ENCODE measurements at regions of chr1 and their contacts with region 1.

Region 1: GRCh38 chr1:150957666-150958065 is 17.0 kb downstream of the CERS2 start:
- DNase-seq: no peak
- H3K4me3 ChIP-seq: no peak overlapping the region
- H3K27ac ChIP-seq: no peak overlapping the region
- H3K4me1 ChIP-seq: no peaks in the 10 kb centered on the region
- H3K27me3 ChIP-seq: no peaks in the 10 kb centered on the region
- CTCF ChIP-seq: no peak

Region 2: DNA sequence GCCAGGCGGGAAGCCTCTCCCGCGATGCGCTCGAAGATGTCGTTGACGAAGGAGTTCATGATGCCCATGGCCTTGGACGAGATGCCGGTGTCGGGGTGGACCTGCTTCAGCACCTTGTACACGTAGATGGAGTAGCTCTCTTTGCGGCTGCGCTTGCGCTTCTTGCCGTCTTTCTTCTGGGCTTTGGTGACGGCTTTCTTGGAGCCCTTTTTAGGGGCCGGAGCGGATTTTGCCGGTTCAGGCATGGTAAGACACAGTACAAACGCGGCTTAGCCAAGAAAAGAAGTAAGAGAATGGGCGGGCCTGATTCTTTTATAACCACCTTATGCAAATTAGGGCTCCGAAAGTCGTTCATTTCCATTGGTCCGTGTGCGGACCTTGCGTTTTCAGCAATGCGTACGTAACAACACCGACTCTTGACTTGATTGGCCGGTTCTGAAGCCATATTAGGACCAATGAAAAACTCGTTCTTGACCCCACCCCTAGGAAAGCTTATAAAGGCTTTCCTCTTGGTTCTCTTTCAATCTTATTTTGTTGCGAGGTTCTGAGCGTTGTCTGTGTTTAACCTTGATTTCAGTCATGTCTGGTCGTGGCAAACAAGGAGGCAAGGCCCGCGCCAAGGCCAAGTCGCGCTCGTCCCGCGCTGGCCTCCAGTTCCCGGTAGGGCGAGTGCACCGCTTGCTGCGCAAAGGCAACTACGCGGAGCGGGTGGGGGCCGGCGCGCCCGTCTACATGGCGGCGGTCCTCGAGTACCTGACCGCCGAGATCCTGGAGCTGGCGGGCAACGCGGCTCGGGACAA is 1071.1 kb before region 1 on chr1:
- CTCF ChIA-PET with region 1: no interaction called
- POLR2A ChIA-PET with region 1: no interaction called
- intact Hi-C with region 1: no loop called
- DNase-seq: peak; percentile 99
- H3K4me3 ChIP-seq: peak overlapping the region; percentile 68
- H3K27ac ChIP-seq: peak overlapping the region; percentile 98
- H3K4me1 ChIP-seq: no peaks in the 10 kb centered on the region
- H3K27me3 ChIP-seq: no peaks in the 10 kb centered on the region
- CTCF ChIP-seq: no peak

Region 3: GRCh38 chr1:150372580-150372979 is 585.1 kb before region 1 on chr1:
- CTCF ChIA-PET with region 1: no interaction called
- POLR2A ChIA-PET with region 1: interaction called, 15 read pairs
- intact Hi-C with region 1: no loop called
- DNase-seq: no peak
- H3K4me3 ChIP-seq: no peak overlapping the region
- H3K27ac ChIP-seq: no peak overlapping the region
- H3K4me1 ChIP-seq: peaks cover 30% of the 10 kb centered on the region
- H3K27me3 ChIP-seq: no peaks in the 10 kb centered on the region
- CTCF ChIP-seq: no peak

Region 4: DNA sequence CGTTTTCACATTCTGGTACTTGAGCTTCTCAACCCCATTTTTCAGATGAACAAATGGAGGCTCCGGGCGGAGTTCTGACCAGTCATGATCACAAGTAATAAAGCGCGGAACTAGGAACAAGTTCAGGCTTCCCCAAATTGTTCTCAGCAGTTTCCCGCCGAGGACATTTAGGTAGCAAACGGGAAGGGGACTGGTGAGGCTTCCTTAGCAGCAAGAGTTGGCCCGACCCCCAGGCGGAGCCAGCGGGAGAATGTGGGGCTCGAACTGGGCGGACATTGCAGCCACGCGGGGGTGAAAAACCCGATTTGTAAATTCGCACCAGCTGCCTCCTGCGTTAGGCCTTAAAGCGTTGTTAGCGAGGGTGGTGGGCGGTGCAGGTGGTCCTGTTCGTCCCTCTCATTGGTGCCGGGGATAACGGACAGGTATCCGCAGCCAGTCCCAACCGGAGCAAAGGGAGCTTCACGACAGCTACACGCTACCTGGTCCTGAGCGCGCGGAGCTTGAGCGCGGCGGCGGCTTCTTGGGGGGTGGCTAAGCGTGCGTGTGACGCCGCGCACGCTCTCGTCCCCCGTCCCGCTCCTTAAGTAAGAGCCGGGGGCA is 173.4 kb after region 1 on chr1:
- CTCF ChIA-PET with region 1: no interaction called
- POLR2A ChIA-PET with region 1: no interaction called
- intact Hi-C with region 1: no loop called
- DNase-seq: peak; percentile 71
- H3K4me3 ChIP-seq: no peak overlapping the region
- H3K27ac ChIP-seq: no peak overlapping the region
- H3K4me1 ChIP-seq: no peaks in the 10 kb centered on the region
- H3K27me3 ChIP-seq: no peaks in the 10 kb centered on the region
- CTCF ChIP-seq: no peak

Region 5: GRCh38 chr1:151187205-151187604 is 229.5 kb after region 1 on chr1:
- CTCF ChIA-PET with region 1: no interaction called
- POLR2A ChIA-PET with region 1: no interaction called
- intact Hi-C with region 1: no loop called
- DNase-seq: no peak
- H3K4me3 ChIP-seq: no peak overlapping the region
- H3K27ac ChIP-seq: no peak overlapping the region
- H3K4me1 ChIP-seq: peaks cover 5% of the 10 kb centered on the region
- H3K27me3 ChIP-seq: no peaks in the 10 kb centered on the region
- CTCF ChIP-seq: no peak